Posterior vena cava (tissue), 2 donors: ENCODE measurements at regions of chr13 and their contacts with region 1.

Region 1: GRCh38 chr13:55615080-55615479 is 1525.6 kb upstream of the PRR20A start:
- DNase-seq: no peak

Region 2: GRCh38 chr13:55307909-55308308 is 307.2 kb before region 1 on chr13:
- intact Hi-C with region 1: loop called in 1 of 2 experiments (anchors 5 kb)
- DNase-seq: no peak

Region 3: DNA sequence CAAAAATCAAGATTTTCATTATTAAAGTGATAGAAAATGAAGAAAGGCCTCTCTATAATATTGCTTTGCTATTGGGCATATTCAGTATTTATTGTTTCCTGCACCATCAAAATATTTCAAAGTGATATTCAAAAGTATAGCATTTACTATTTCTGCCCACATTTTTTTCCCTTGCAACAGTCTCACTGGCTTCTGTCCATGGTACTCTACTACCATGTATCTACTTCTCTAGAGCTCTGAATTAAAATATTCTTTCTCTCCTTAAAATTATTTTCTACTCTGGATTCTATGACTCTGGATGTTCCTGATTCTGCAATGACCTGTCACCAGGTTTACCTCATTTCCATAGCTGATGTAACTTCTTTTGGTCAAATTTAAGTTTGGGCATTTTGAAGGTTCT is 17.3 kb after region 1 on chr13:
- intact Hi-C with region 1: no loop called
- DNase-seq: no peak